ENCODE measurements at regions of chrX and their contacts with region 1.

Region 1: GRCh38 chrX:51420610-51421009 is 75.8 kb downstream of the NUDT11 start:
- DNase-seq: peak in 7 of 14 experiments; percentile 4 to 69 (median 47)
- ATAC-seq: peak; percentile 52
- H3K4me3 ChIP-seq: no peak overlapping the region
- H3K4me3 Mint-ChIP-seq: no peak overlapping the region
- H3K27ac ChIP-seq: no peak overlapping the region
- H3K27ac Mint-ChIP-seq: no peak overlapping the region
- H3K4me1 ChIP-seq: no peaks in the 10 kb centered on the region
- H3K4me1 Mint-ChIP-seq: no peaks in the 10 kb centered on the region
- H3K27me3 ChIP-seq: no peaks in the 10 kb centered on the region
- H3K27me3 Mint-ChIP-seq: no peaks in the 10 kb centered on the region
- CTCF ChIP-seq: peak; percentile 64

Region 2: DNA sequence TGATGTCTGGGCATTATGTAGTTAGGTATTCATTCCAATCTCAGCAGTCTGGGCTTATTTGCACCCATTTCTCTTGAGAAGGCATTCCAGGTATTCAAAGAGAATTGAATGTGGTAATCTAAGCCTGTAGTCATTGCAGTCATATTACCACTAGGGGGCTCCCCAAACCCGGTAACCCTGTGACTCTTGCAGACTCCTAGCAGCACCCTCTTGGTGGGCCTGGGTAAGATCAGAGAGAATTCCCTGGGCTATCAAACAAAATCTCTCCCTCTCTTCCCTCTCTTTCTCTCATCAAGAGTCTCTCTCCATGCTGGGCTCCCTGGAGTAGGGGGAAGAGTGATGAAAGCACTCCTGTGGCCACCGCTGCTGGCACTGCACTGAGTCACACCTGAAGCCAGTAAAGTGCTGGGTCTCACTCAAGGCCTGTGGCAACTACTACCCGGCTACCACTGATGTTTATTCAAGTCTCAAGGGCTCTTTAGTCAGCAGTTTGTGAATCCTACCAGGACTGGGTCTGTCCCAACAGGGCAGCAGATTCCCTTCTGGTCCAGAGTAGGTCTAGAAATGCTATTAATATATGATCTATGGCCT is 275.7 kb before region 1 on chrX:
- CTCF ChIA-PET with region 1: no interaction called
- POLR2A ChIA-PET with region 1: no interaction called
- intact Hi-C with region 1: loop called in 1 of 2 experiments (anchors 10 kb)
- DNase-seq: peak in 7 of 14 experiments; percentile 1 to 40 (median 28)
- ATAC-seq: no peak
- H3K4me3 ChIP-seq: no peak overlapping the region
- H3K4me3 Mint-ChIP-seq: no peak overlapping the region
- H3K27ac ChIP-seq: no peak overlapping the region
- H3K27ac Mint-ChIP-seq: no peak overlapping the region
- H3K4me1 ChIP-seq: no peaks in the 10 kb centered on the region
- H3K4me1 Mint-ChIP-seq: no peaks in the 10 kb centered on the region
- H3K27me3 ChIP-seq: peaks cover 0 to 5% of the 10 kb centered on the region in 2 experiments
- H3K27me3 Mint-ChIP-seq: peaks cover 20% of the 10 kb centered on the region
- CTCF ChIP-seq: peak; percentile 26

Region 3: GRCh38 chrX:51336584-51336983 is 84.0 kb before region 1 on chrX:
- CTCF ChIA-PET with region 1: interaction called, 22 read pairs
- POLR2A ChIA-PET with region 1: interaction called, 3 read pairs
- intact Hi-C with region 1: loop called (anchors 1 to 2 kb)
- DNase-seq: peak in 8 of 14 experiments; percentile 2 to 57 (median 26)
- ATAC-seq: peak; percentile 79
- H3K4me3 ChIP-seq: no peak overlapping the region
- H3K4me3 Mint-ChIP-seq: no peak overlapping the region
- H3K27ac ChIP-seq: no peak overlapping the region
- H3K27ac Mint-ChIP-seq: no peak overlapping the region
- H3K4me1 ChIP-seq: peaks cover 5% of the 10 kb centered on the region
- H3K4me1 Mint-ChIP-seq: no peaks in the 10 kb centered on the region
- H3K27me3 ChIP-seq: no peaks in the 10 kb centered on the region
- H3K27me3 Mint-ChIP-seq: no peaks in the 10 kb centered on the region
- CTCF ChIP-seq: peak; percentile 58

Measured in CD4-positive, alpha-beta T cell (primary cell).